ENCODE measurements at regions of chr19 and their contacts with region 1.

Region 1: DNA sequence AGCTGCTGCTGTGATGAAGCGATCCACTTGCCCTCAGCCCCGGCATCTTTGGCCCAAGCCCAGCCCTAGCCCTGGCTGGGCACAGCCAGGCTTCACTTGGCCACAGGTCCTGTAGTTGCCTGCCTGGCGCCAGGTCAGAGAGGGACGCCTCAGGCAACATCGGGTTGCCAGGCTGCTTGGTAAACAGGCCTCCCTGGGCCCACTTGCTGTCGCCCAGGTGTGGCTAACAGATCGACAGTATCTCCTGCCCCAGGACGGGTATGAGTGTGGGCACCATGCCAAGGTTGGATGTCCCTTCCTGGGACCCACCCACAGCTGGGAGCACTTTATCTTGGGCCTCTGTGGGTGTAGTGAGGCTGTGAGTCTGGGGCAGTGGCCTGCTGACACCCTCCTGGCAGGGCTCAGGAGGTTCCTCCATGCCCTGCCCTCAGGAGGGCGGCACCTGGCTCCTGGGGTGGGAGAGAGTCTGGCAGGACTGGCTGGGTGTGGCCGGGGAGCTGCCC is 27.8 kb downstream of the CARM1 start:
- DNase-seq: peak; percentile 96 to 97
- H3K4me3 ChIP-seq: peak overlapping the region; percentile 8; the same call in 1 of the 2 replicates
- H3K27ac ChIP-seq: peak overlapping the region; percentile 35
- H3K4me1 ChIP-seq: peaks cover 37% of the 10 kb centered on the region
- H3K27me3 ChIP-seq: no peaks in the 10 kb centered on the region
- CTCF ChIP-seq: no peak

Region 2: DNA sequence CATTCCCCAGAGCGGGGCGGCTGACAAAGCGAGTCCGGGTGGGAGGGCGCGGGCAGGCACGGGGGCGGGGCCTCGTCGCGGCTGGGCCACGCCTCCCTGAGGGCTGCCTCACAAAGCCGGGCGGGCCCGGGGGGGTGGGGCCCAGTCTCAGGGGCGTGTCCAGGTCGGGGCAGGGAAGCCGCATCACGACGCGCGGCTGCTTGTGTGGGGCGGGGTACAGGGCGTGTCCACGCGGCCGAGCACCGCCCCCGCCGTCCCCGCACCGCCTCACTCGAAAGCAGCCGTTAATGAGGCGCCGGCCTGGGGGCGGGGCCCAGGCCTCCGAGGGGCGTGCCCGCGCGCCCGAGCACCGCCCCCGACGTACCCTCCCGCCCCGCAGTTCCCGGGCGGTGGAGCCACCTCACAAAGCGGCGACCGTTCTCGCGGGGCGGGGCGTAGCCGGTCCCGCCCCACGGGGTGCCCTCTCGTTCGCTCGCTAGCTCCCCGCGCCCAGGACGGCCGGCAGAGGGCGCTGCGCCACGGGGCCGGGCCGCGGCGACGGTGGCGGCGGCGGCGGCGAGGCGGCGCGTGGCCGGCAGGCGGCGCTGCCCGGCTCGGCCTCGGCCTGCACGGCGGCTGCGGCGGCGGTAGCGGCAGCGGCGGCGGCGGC is 28.1 kb before region 1 on chr19 and contains the start of gene CARM1:
- CTCF ChIA-PET with region 1: interaction called, 10 read pairs
- POLR2A ChIA-PET with region 1: interaction called, 27 read pairs
- intact Hi-C with region 1: loop called (anchors 2 kb)
- DNase-seq: peak; percentile 90 to 99
- H3K4me3 ChIP-seq: peak within 1 kb of the TSS; percentile 85
- H3K27ac ChIP-seq: peak within 1 kb of the TSS; percentile 9; the same call in 1 of the 2 replicates
- H3K4me1 ChIP-seq: peaks cover 17% of the 10 kb centered on the region
- H3K27me3 ChIP-seq: no peaks in the 10 kb centered on the region
- CTCF ChIP-seq: peak; percentile 45; the same call in 1 of the 2 replicates
- total RNA-seq, gene CARM1: 56.0 and 63.7 TPM in 2 replicates

Region 3: GRCh38 chr19:10915130-10916091 is 16.2 kb after region 1 on chr19:
- CTCF ChIA-PET with region 1: no interaction called
- POLR2A ChIA-PET with region 1: no interaction called
- intact Hi-C with region 1: no loop called
- DNase-seq: peak; percentile 53 to 73
- H3K4me3 ChIP-seq: no peak overlapping the region
- H3K27ac ChIP-seq: no peak overlapping the region
- H3K4me1 ChIP-seq: peaks cover 12% of the 10 kb centered on the region; the same call in 1 of the 2 replicates
- H3K27me3 ChIP-seq: no peaks in the 10 kb centered on the region
- CTCF ChIP-seq: no peak

Region 4: DNA sequence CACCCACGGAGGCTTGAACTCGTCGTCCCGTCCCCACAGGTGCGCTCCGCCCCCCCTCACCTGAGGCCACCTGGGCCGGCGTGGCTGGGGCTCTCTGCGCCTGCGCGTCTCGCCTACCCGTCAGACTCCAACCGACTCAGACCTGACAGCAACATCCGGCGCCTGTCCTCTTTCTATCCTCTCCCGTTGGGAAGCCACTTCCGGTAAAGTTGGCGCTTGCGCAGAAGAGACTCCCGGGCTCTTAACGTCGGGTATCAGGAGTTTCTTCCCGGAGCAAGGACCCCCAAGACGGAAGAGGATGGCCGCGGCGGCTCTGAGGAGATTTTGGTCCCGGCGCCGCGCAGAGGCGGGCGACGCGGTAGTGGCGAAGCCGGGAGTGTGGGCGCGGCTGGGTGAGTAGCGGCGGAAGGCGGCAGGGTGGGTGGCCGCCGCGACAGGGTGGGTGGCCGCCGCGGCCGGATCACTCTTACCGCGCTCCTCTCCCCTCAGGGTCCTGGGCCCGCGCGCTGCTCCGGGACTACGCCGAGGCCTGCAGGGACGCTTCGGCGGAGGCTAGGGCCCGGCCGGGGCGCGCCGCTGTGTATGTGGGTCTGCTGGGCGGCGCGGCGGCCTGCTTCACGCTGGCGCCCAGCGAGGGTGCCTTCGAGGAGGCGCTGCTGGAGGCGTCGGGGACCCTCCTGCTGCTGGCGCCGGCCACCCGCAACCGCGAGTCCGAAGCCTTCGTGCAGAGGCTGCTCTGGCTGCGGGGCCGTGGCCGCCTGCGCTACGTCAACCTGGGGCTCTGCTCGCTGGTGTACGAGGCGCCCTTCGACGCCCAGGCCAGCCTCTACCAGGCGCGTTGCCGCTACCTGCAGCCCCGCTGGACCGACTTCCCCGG is 29.6 kb after region 1 on chr19 and contains the starts of genes TIMM29 and YIPF2:
- CTCF ChIA-PET with region 1: no interaction called
- POLR2A ChIA-PET with region 1: no interaction called
- intact Hi-C with region 1: loop called (anchors 1 kb)
- DNase-seq: peak; percentile 96 to 98
- H3K4me3 ChIP-seq: peak within 1 kb of the TSS; percentile 84
- H3K27ac ChIP-seq: no peak within 1 kb of the TSS
- H3K4me1 ChIP-seq: peaks cover 15% of the 10 kb centered on the region
- H3K27me3 ChIP-seq: no peaks in the 10 kb centered on the region
- CTCF ChIP-seq: no peak
- total RNA-seq, gene TIMM29: 22.4 and 26.2 TPM in 2 replicates
- total RNA-seq, gene YIPF2: 60.2 and 79.8 TPM in 2 replicates

Measured in PC-9 (cell line).